Activated naive CD4-positive, alpha-beta T cell treated with anti-CD3 and anti-CD28 coated beads for 36 hours (primary cell): ENCODE measurements at regions of chr5 and their contacts with region 1.

Region 1: DNA sequence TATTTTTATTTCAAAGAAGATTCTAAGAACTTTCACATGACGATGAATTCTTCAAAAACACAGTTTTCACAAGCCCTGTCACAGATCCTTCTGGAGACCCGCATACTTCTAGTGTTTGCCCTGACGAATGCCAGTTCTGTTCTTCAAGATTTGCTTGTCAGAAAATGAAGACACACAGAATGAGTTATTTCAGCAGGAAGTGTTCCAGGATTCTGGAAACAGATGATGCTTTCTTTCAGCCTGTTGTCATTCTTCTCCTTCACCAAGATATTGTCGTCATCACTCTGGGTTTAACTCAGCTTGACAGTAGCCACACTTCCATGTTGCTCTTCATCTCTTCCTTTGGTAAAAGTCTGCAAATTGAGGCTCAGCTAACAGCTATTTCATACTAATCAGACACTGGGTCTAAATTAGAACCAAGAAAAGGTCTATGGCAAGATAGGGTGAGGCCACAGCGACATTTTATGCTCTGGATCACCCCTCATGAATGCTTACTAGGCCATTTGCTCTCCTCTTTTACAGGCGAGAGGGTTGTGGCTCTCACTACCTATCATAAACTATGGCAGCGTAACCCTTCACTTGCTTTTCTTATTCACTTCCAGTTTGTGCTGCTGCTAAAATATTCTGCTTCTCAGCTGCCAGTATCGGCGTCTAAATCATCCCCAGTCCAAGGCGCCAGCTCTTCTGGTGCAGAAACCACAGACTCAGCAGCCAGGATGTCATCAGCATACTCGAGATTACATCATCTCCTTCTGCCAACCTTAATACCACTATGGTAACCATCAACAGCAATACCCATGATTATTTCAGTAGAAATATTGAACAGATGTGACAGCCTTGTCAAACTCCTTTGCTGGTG is 159.6 kb upstream of the TBCA start:
- DNase-seq: peak; percentile 60
- H3K4me3 Mint-ChIP-seq: peak overlapping the region; percentile 30
- H3K27ac Mint-ChIP-seq: peak overlapping the region; percentile 80
- H3K4me1 Mint-ChIP-seq: peaks cover 21% of the 10 kb centered on the region
- H3K27me3 Mint-ChIP-seq: peaks cover 3% of the 10 kb centered on the region

Region 2: GRCh38 chr5:77882670-77883257 is 53.0 kb before region 1 on chr5:
- CTCF ChIA-PET with region 1: no interaction called
- intact Hi-C with region 1: loop called (anchors 2 kb)
- DNase-seq: peak; percentile 68
- H3K4me3 Mint-ChIP-seq: no peak overlapping the region
- H3K27ac Mint-ChIP-seq: peak overlapping the region; percentile 88
- H3K4me1 Mint-ChIP-seq: peaks cover 29% of the 10 kb centered on the region
- H3K27me3 Mint-ChIP-seq: peaks cover 11% of the 10 kb centered on the region

Region 3: GRCh38 chr5:77898385-77898784 is 37.4 kb before region 1 on chr5:
- CTCF ChIA-PET with region 1: no interaction called
- intact Hi-C with region 1: no loop called
- DNase-seq: no peak
- H3K4me3 Mint-ChIP-seq: no peak overlapping the region
- H3K27ac Mint-ChIP-seq: no peak overlapping the region
- H3K4me1 Mint-ChIP-seq: peaks cover 4% of the 10 kb centered on the region
- H3K27me3 Mint-ChIP-seq: no peaks in the 10 kb centered on the region

Region 4: GRCh38 chr5:77925503-77925902 is 10.2 kb before region 1 on chr5:
- CTCF ChIA-PET with region 1: no interaction called
- intact Hi-C with region 1: loop called (anchors 1 kb)
- DNase-seq: no peak
- H3K4me3 Mint-ChIP-seq: peak overlapping the region; percentile 11
- H3K27ac Mint-ChIP-seq: peak overlapping the region; percentile 75
- H3K4me1 Mint-ChIP-seq: peaks cover 14% of the 10 kb centered on the region
- H3K27me3 Mint-ChIP-seq: peaks cover 8% of the 10 kb centered on the region

Region 5: DNA sequence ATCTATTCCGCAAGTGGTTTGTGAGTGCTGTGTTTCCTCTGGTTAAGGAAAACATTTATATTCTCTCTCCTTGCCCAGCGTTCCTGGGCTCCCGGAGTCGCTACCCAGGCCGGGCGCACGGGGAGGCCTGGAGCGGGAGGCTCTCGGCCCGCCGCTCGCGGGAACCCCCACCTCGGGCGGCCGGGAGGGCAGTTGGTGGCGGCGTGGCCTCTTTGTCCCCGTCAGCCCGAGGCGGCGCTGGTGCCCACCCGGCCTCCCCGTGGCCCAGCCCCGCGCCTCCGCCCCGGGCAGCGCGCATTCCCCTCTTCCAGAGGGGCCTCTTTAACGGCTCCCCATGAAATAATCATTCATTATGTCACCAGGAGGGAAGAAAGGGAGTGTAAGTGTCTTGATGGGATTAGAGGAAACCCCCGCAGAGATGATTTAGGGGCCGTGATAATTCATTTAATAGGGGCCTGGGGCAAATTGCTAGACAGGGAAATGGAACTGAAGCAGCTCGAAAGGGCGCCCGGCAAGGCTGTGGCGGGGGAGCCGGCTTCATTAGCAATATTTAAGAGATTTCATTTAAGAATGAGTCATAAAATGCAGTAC is 22.3 kb after region 1 on chr5:
- CTCF ChIA-PET with region 1: no interaction called
- intact Hi-C with region 1: loop called (anchors 2 kb)
- DNase-seq: no peak
- H3K4me3 Mint-ChIP-seq: no peak overlapping the region
- H3K27ac Mint-ChIP-seq: no peak overlapping the region
- H3K4me1 Mint-ChIP-seq: peaks cover 21% of the 10 kb centered on the region
- H3K27me3 Mint-ChIP-seq: peaks cover 27% of the 10 kb centered on the region

Region 6: GRCh38 chr5:77972469-77973252 is 36.9 kb after region 1 on chr5:
- CTCF ChIA-PET with region 1: no interaction called
- intact Hi-C with region 1: no loop called
- DNase-seq: peak; percentile 43
- H3K4me3 Mint-ChIP-seq: peak overlapping the region; percentile 69
- H3K27ac Mint-ChIP-seq: no peak overlapping the region
- H3K4me1 Mint-ChIP-seq: peaks cover 13% of the 10 kb centered on the region
- H3K27me3 Mint-ChIP-seq: peaks cover 69% of the 10 kb centered on the region